Activated CD8-positive, alpha-beta T cell treated with anti-CD3 and anti-CD28 coated beads, Interleukin-2, amount 10 ng/mL, durations not matched to agents 7 days and 5 days (primary cell): ENCODE measurements at regions of chr2 and their contacts with region 1.

Region 1: GRCh38 chr2:98731041-98731893 is at the start of gene MGAT4A:
- DNase-seq: peak; percentile 81
- ATAC-seq: peak; percentile 85
- H3K4me3 Mint-ChIP-seq: peak within 1 kb of the TSS; percentile 92
- H3K27ac Mint-ChIP-seq: peak within 1 kb of the TSS; percentile 90
- H3K4me1 Mint-ChIP-seq: peaks cover 64% of the 10 kb centered on the region
- H3K27me3 Mint-ChIP-seq: no peaks in the 10 kb centered on the region
- total RNA-seq, gene MGAT4A: 73.4 to 76.2 TPM

Region 2: DNA sequence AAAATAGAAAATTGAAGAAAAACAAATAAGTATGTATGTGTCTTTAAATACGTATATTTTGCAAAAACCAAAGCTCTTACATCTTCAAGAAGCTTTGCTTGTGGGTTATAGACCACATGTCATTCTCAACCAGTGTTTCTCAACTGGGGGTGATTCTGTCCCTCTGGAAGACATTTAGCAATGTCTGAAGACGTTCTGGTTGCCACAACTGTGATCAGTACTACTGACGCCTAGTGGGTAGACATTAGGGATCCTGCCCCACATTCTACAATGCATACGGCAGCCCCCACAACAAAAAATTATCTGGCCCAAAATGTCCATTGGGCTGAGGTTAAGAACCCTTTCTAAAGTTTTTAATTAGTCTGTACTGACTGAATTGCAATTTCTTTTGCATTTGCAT is 74.5 kb before region 1 on chr2:
- CTCF ChIA-PET with region 1: interaction called, 26 read pairs
- POLR2A ChIA-PET with region 1: interaction called, 38 read pairs
- DNase-seq: peak; percentile 69
- ATAC-seq: peak; percentile 71
- H3K4me3 Mint-ChIP-seq: peak overlapping the region; percentile 57
- H3K27ac Mint-ChIP-seq: peak overlapping the region; percentile 87
- H3K4me1 Mint-ChIP-seq: peaks cover 86% of the 10 kb centered on the region
- H3K27me3 Mint-ChIP-seq: no peaks in the 10 kb centered on the region

Region 3: GRCh38 chr2:98664327-98664726 is 66.9 kb before region 1 on chr2:
- CTCF ChIA-PET with region 1: interaction called, 5 read pairs
- POLR2A ChIA-PET with region 1: interaction called, 38 read pairs
- DNase-seq: peak; percentile 78
- ATAC-seq: peak; percentile 72
- H3K4me3 Mint-ChIP-seq: peak overlapping the region; percentile 65
- H3K27ac Mint-ChIP-seq: peak overlapping the region; percentile 93
- H3K4me1 Mint-ChIP-seq: peaks cover 68% of the 10 kb centered on the region
- H3K27me3 Mint-ChIP-seq: no peaks in the 10 kb centered on the region

Region 4: GRCh38 chr2:98757904-98758421 is 26.7 kb after region 1 on chr2:
- CTCF ChIA-PET with region 1: interaction called, 14 read pairs
- POLR2A ChIA-PET with region 1: interaction called, 10 read pairs
- DNase-seq: peak; percentile 75
- ATAC-seq: peak; percentile 80
- H3K4me3 Mint-ChIP-seq: peak overlapping the region; percentile 71
- H3K27ac Mint-ChIP-seq: peak overlapping the region; percentile 95
- H3K4me1 Mint-ChIP-seq: peaks cover 56% of the 10 kb centered on the region
- H3K27me3 Mint-ChIP-seq: no peaks in the 10 kb centered on the region

Region 5: GRCh38 chr2:98822301-98823164 is 91.3 kb after region 1 on chr2:
- CTCF ChIA-PET with region 1: interaction called, 20 read pairs
- POLR2A ChIA-PET with region 1: interaction called, 4 read pairs
- DNase-seq: peak; percentile 69
- ATAC-seq: peak; percentile 93
- H3K4me3 Mint-ChIP-seq: peak overlapping the region; percentile 57
- H3K27ac Mint-ChIP-seq: no peak overlapping the region
- H3K4me1 Mint-ChIP-seq: peaks cover 17% of the 10 kb centered on the region
- H3K27me3 Mint-ChIP-seq: peaks cover 3% of the 10 kb centered on the region

Region 6: GRCh38 chr2:98893911-98894321 is 162.6 kb after region 1 on chr2:
- CTCF ChIA-PET with region 1: no interaction called
- POLR2A ChIA-PET with region 1: no interaction called
- DNase-seq: no peak
- ATAC-seq: no peak
- H3K4me3 Mint-ChIP-seq: no peak overlapping the region
- H3K27ac Mint-ChIP-seq: no peak overlapping the region
- H3K4me1 Mint-ChIP-seq: peaks cover 4% of the 10 kb centered on the region
- H3K27me3 Mint-ChIP-seq: peaks cover 18% of the 10 kb centered on the region